Activated T-helper 1 cell treated with anti-CD3 and anti-CD28 coated beads, Interleukin-12 subunit alpha, Interleukin-12 subunit beta, Interleukin-2, Interleukin-4 antibody, amounts not matched to agents 30 ng/mL and 10 ng/mL and 1 ng/mL, durations not matched to agents 14 hours and 24 hours and 36 hours (primary cell): ENCODE measurements at regions of chr10 and their contacts with region 1.

Region 1: GRCh38 chr10:33134011-33134751 is 176.2 kb upstream of the ITGB1 start:
- DNase-seq: peak; percentile 48
- H3K4me3 Mint-ChIP-seq: peak overlapping the region; percentile 48
- H3K27ac Mint-ChIP-seq: peak overlapping the region; percentile 88
- H3K4me1 Mint-ChIP-seq: peaks cover 61% of the 10 kb centered on the region
- H3K27me3 Mint-ChIP-seq: no peaks in the 10 kb centered on the region

Region 2: GRCh38 chr10:32149252-32149955 is 984.8 kb before region 1 on chr10:
- intact Hi-C with region 1: loop called (anchors 1 kb)
- DNase-seq: peak; percentile 36
- H3K4me3 Mint-ChIP-seq: peak overlapping the region; percentile 45
- H3K27ac Mint-ChIP-seq: peak overlapping the region; percentile 94
- H3K4me1 Mint-ChIP-seq: peaks cover 41% of the 10 kb centered on the region
- H3K27me3 Mint-ChIP-seq: no peaks in the 10 kb centered on the region

Region 3: DNA sequence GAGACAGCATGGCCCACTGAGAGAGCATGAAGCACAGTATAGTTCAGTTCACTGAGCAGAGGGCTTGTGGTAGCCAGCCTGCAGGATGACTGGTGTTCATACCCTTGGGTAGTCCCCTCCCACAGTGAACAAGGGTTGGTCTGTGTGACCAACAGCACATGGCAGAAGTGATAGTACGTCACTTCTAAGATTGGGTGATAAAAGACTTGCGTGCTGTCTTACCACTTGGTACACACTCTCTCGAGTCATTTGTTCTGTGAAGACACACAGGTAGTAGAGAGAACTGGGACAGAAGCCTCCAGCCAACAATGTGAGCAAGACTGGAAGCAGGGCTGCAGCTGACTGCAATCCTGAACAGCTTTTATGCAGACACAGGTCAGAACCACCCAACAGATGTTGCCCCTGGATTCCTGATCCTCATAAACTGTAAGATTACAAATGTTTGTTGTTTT is 801.9 kb before region 1 on chr10:
- intact Hi-C with region 1: loop called (anchors 5 kb)
- DNase-seq: peak; percentile 71
- H3K4me3 Mint-ChIP-seq: peak overlapping the region; percentile 80
- H3K27ac Mint-ChIP-seq: peak overlapping the region; percentile 97
- H3K4me1 Mint-ChIP-seq: peaks cover 93% of the 10 kb centered on the region
- H3K27me3 Mint-ChIP-seq: no peaks in the 10 kb centered on the region

Region 4: GRCh38 chr10:33098951-33099663 is 35.1 kb before region 1 on chr10:
- intact Hi-C with region 1: loop called (anchors 1 kb)
- DNase-seq: no peak
- H3K4me3 Mint-ChIP-seq: no peak overlapping the region
- H3K27ac Mint-ChIP-seq: peak overlapping the region; percentile 73
- H3K4me1 Mint-ChIP-seq: peaks cover 30% of the 10 kb centered on the region
- H3K27me3 Mint-ChIP-seq: peaks cover 2% of the 10 kb centered on the region

Region 5: GRCh38 chr10:33120700-33121099 is 13.5 kb before region 1 on chr10:
- intact Hi-C with region 1: loop called (anchors 1 kb)
- DNase-seq: no peak
- H3K4me3 Mint-ChIP-seq: peak overlapping the region; percentile 2
- H3K27ac Mint-ChIP-seq: peak overlapping the region; percentile 57
- H3K4me1 Mint-ChIP-seq: peaks cover 45% of the 10 kb centered on the region
- H3K27me3 Mint-ChIP-seq: no peaks in the 10 kb centered on the region

Region 6: GRCh38 chr10:33376976-33377657 is 242.9 kb after region 1 on chr10:
- intact Hi-C with region 1: loop called (anchors 5 kb)
- DNase-seq: no peak
- H3K4me3 Mint-ChIP-seq: no peak overlapping the region
- H3K27ac Mint-ChIP-seq: no peak overlapping the region
- H3K4me1 Mint-ChIP-seq: no peaks in the 10 kb centered on the region
- H3K27me3 Mint-ChIP-seq: peaks cover 3% of the 10 kb centered on the region